ENCODE measurements at regions of chr3 and their contacts with region 1.

Region 1: DNA sequence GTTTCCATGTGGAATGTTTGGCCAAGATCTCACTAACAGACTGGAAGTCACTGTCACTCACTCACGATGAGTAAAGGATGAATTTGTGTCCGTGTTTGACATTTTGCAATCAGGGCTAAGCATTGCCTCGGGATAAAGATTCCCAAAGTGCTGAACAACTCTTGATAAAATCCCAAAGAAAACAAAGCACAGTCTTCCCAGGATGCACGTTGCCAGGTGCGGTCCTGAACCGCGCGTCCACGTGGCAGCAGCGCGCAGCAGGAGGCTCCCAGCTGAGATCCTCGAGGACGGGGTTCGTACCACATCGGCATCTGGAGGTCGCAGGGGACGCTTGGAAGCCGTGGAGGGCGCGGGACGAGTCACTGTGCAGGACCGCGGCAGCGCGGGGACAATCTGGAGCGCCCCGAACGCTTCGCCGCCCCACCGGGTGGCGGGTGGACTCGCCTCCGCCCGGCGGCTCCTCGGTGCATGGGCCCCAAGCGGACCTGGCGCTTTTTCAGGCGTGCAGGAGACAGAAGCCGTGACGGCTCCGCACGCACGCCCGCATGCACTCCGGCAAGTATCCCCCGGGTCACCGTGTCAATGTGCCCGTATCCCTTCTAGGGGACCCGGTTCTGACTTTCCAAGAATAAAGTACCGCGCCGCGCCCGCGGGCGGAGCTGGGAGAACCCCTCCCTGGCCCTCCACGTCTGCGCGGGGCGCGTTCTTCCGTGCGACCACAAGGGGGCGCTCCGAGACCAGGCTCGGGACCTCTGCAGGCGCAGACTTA is 17.7 kb downstream of the CPN2 start:
- DNase-seq: peak; percentile 78 to 94 (median 88)
- ATAC-seq: peak; percentile 98
- H3K4me3 ChIP-seq: peak overlapping the region; percentile 53
- H3K4me3 Mint-ChIP-seq: peak overlapping the region; percentile 12 to 84 (median 71)
- H3K27ac ChIP-seq: no peak overlapping the region
- H3K27ac Mint-ChIP-seq: no peak overlapping the region
- H3K4me1 ChIP-seq: peaks cover 0 to 4% of the 10 kb centered on the region in 2 donors
- H3K4me1 Mint-ChIP-seq: peaks cover 0 to 12% (median 4%) of the 10 kb centered on the region in 7 donors
- H3K27me3 ChIP-seq: peaks cover 0 to 6% of the 10 kb centered on the region in 2 donors
- H3K27me3 Mint-ChIP-seq: peaks cover 9 to 30% (median 22%) of the 10 kb centered on the region in 5 donors

Region 2: DNA sequence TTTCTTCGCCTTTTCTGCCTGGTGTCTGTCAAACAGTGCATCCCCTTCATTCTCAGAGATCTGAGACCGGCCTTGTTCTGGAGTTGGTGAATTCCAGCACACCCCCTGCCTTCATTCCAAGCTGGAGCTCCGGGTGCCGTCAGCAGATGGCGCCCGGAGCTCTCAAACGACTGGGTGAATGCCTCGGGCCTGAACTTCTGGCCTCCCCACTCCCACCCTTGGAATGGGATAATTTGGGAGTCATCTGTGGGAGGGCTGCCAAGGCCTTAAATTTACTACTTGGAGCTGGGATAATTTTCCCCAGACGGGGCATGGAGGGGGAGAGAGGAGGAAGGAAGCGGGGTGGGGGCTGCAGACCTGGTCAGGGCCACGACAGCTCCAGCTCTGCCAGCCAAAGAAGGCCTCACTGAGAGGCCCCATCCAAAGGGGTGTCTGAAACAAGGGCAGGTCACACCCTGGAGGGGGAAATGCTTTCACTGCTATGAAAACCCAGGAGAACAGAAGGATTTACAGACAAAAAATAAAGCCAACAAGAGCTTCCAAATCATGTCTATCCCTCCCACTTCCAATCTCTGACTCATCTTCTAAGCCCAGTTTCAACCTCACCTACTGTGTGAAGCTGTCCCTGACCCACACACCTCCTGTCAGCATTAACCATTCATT is 552.5 kb before region 1 on chr3:
- CTCF ChIA-PET with region 1: no interaction called
- POLR2A ChIA-PET with region 1: no interaction called
- intact Hi-C with region 1: loop called in 1 of 2 experiments (anchors 5 kb)
- DNase-seq: peak in 2 of 9 donors; percentile 4 to 13
- ATAC-seq: no peak
- H3K4me3 ChIP-seq: no peak overlapping the region
- H3K4me3 Mint-ChIP-seq: no peak overlapping the region
- H3K27ac ChIP-seq: no peak overlapping the region
- H3K27ac Mint-ChIP-seq: peak overlapping the region in 1 of 9 donors; percentile 45
- H3K4me1 ChIP-seq: peaks cover 0 to 5% of the 10 kb centered on the region in 2 donors
- H3K4me1 Mint-ChIP-seq: peaks cover 4 to 35% (median 9%) of the 10 kb centered on the region in 7 donors
- H3K27me3 ChIP-seq: peaks cover 0 to 3% of the 10 kb centered on the region in 2 donors
- H3K27me3 Mint-ChIP-seq: peaks cover 21 to 60% (median 37%) of the 10 kb centered on the region in 5 donors

Region 3: GRCh38 chr3:193857996-193858395 is 475.4 kb before region 1 on chr3:
- CTCF ChIA-PET with region 1: no interaction called
- POLR2A ChIA-PET with region 1: no interaction called
- intact Hi-C with region 1: no loop called
- DNase-seq: no peak
- ATAC-seq: peak; percentile 46
- H3K4me3 ChIP-seq: no peak overlapping the region
- H3K4me3 Mint-ChIP-seq: no peak overlapping the region
- H3K27ac ChIP-seq: no peak overlapping the region
- H3K27ac Mint-ChIP-seq: no peak overlapping the region
- H3K4me1 ChIP-seq: no peaks in the 10 kb centered on the region
- H3K4me1 Mint-ChIP-seq: peaks cover 0 to 7% (median 0%) of the 10 kb centered on the region in 7 donors
- H3K27me3 ChIP-seq: no peaks in the 10 kb centered on the region
- H3K27me3 Mint-ChIP-seq: peaks cover 0 to 26% (median 0%) of the 10 kb centered on the region in 5 donors

Region 4: DNA sequence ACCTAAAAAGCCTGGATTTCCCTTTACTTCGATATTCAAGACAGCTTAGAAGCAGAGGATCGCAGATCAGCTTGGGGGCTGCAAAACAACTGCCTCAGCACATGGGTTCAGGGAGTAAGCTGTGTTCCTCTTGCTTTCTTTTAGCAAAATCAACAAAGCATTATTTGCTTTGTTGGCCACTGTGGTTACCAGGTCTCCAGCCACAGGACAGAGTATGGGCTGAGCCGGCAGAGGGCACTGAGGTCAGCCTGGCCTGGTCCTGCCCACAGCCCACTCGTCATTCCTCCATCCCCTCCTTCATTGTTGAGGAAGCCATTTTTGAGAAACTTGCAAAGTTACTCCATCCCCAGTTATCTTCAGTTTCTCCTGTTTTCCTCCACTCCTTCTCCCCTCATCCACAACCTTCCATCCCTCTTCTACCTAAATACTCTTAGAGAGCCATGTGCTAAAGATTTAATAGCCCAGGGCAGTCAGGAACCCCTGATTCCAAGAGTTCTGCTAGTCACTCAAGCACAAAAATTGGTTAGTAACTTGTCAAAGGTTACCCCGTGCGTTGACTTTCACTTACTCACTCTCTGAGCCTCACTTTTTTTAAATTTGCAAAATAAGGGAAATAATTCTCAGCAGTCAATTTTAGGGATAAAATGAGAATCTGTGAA is 257.5 kb before region 1 on chr3:
- CTCF ChIA-PET with region 1: no interaction called
- POLR2A ChIA-PET with region 1: no interaction called
- intact Hi-C with region 1: no loop called
- DNase-seq: no peak
- ATAC-seq: no peak
- H3K4me3 ChIP-seq: no peak overlapping the region
- H3K4me3 Mint-ChIP-seq: no peak overlapping the region
- H3K27ac ChIP-seq: no peak overlapping the region
- H3K27ac Mint-ChIP-seq: no peak overlapping the region
- H3K4me1 ChIP-seq: peaks cover 0 to 9% of the 10 kb centered on the region in 2 donors
- H3K4me1 Mint-ChIP-seq: peaks cover 0 to 15% (median 5%) of the 10 kb centered on the region in 7 donors
- H3K27me3 ChIP-seq: no peaks in the 10 kb centered on the region
- H3K27me3 Mint-ChIP-seq: peaks cover 0 to 87% (median 27%) of the 10 kb centered on the region in 5 donors

Region 5: DNA sequence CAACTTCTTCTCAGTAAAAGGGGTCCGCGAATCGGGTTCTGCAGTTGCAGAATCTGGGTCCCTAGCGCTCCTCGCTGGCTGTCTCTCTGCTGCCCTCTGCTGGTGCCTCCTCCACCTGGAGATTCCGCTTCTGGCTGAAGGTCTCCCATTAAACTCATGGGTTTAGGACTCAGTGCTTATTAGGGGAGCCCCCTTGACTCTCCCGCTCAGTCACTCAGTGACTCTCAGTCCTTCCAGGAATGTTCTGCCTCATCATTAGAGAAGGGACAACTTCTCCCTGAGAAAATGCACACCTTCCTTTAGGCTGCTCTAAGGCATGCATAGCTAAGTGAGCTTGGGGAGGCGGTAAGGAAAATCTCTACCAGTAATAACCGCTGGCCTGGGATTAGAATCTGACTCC is 10.6 kb after region 1 on chr3:
- CTCF ChIA-PET with region 1: interaction called, 8 read pairs
- POLR2A ChIA-PET with region 1: no interaction called
- intact Hi-C with region 1: loop called (anchors 1 kb)
- DNase-seq: peak; percentile 36 to 74 (median 59)
- ATAC-seq: peak; percentile 82
- H3K4me3 ChIP-seq: no peak overlapping the region
- H3K4me3 Mint-ChIP-seq: no peak overlapping the region
- H3K27ac ChIP-seq: no peak overlapping the region
- H3K27ac Mint-ChIP-seq: no peak overlapping the region
- H3K4me1 ChIP-seq: no peaks in the 10 kb centered on the region
- H3K4me1 Mint-ChIP-seq: peaks cover 0 to 5% (median 0%) of the 10 kb centered on the region in 7 donors
- H3K27me3 ChIP-seq: no peaks in the 10 kb centered on the region
- H3K27me3 Mint-ChIP-seq: peaks cover 0 to 7% (median 7%) of the 10 kb centered on the region in 5 donors

Region 6: GRCh38 chr3:194395778-194396547 is 62.6 kb after region 1 on chr3:
- CTCF ChIA-PET with region 1: interaction called, 256 read pairs
- POLR2A ChIA-PET with region 1: interaction called, 8 read pairs
- intact Hi-C with region 1: loop called (anchors 2 kb)
- DNase-seq: peak; percentile 29 to 86 (median 74)
- ATAC-seq: peak; percentile 85
- H3K4me3 ChIP-seq: peak overlapping the region; percentile 73
- H3K4me3 Mint-ChIP-seq: peak overlapping the region; percentile 82 to 98 (median 90)
- H3K27ac ChIP-seq: peak overlapping the region; percentile 81
- H3K27ac Mint-ChIP-seq: peak overlapping the region; percentile 73 to 98 (median 93)
- H3K4me1 ChIP-seq: peaks cover 4 to 26% of the 10 kb centered on the region in 2 donors
- H3K4me1 Mint-ChIP-seq: peaks cover 34 to 64% (median 47%) of the 10 kb centered on the region in 7 donors
- H3K27me3 ChIP-seq: no peaks in the 10 kb centered on the region
- H3K27me3 Mint-ChIP-seq: peaks cover 0 to 26% (median 0%) of the 10 kb centered on the region in 5 donors

Region 7: DNA sequence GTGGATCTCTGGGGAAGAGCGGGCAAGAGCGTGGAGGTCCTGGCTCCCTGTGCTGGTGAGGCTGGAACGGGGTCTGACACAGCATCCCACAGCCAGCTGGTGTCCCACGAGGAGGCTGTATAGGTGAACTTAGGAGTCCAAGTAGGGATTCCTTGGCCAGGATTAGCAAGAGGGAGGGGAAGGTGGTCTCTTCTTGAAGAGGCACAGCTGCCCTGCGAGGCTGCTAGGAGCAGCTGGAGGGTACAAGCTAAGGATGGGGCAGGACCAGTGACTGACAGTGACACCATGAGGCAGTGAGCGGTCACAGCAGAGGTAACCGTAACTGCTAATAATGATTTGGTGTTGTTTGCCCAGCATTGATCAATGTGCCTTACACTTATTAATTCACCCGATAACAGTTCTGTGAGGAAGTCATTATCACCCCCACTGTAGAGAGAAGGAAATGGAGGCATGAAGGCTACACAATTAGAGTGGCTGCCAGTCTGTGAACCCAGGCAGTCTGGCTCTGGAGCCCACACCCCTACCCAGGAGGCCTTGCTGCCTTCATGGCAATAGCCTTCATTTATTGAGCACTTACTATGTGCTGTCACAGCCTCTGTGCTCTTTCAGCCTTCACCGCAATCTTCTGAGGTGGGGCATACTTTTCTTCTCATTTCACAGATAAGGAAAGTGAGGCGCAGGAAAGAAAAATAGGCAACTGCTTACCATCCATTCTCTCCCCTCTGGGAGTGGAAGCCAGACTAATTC is 240.5 kb after region 1 on chr3:
- CTCF ChIA-PET with region 1: no interaction called
- POLR2A ChIA-PET with region 1: no interaction called
- intact Hi-C with region 1: loop called in 1 of 2 experiments (anchors 5 kb)
- DNase-seq: peak in 6 of 9 donors; percentile 18 to 38 (median 24)
- ATAC-seq: peak; percentile 87
- H3K4me3 ChIP-seq: no peak overlapping the region
- H3K4me3 Mint-ChIP-seq: no peak overlapping the region
- H3K27ac ChIP-seq: no peak overlapping the region
- H3K27ac Mint-ChIP-seq: no peak overlapping the region
- H3K4me1 ChIP-seq: no peaks in the 10 kb centered on the region
- H3K4me1 Mint-ChIP-seq: peaks cover 0 to 17% (median 0%) of the 10 kb centered on the region in 7 donors
- H3K27me3 ChIP-seq: no peaks in the 10 kb centered on the region
- H3K27me3 Mint-ChIP-seq: peaks cover 15 to 30% (median 24%) of the 10 kb centered on the region in 5 donors

Region 8: GRCh38 chr3:194592798-194593752 is 259.7 kb after region 1 on chr3:
- CTCF ChIA-PET with region 1: interaction called, 3 read pairs
- POLR2A ChIA-PET with region 1: no interaction called
- intact Hi-C with region 1: loop called in 1 of 2 experiments (anchors 1 kb)
- DNase-seq: no peak
- ATAC-seq: no peak
- H3K4me3 ChIP-seq: no peak overlapping the region
- H3K4me3 Mint-ChIP-seq: no peak overlapping the region
- H3K27ac ChIP-seq: no peak overlapping the region
- H3K27ac Mint-ChIP-seq: no peak overlapping the region
- H3K4me1 ChIP-seq: no peaks in the 10 kb centered on the region
- H3K4me1 Mint-ChIP-seq: peaks cover 0 to 7% (median 4%) of the 10 kb centered on the region in 7 donors
- H3K27me3 ChIP-seq: no peaks in the 10 kb centered on the region
- H3K27me3 Mint-ChIP-seq: no peaks in the 10 kb centered on the region